ENCODE measurements at regions of chr6 and their contacts with region 1.

Region 1: GRCh38 chr6:167093922-167094432 is 28.9 kb upstream of the CCR6 start:
- DNase-seq: peak; percentile 32 to 82 (median 67)
- ATAC-seq: peak; percentile 69 to 74 (median 72)
- H3K4me3 ChIP-seq: peak overlapping the region; percentile 45 to 66
- H3K4me3 Mint-ChIP-seq: peak overlapping the region; percentile 61 to 73 (median 70)
- H3K27ac ChIP-seq: peak overlapping the region; percentile 82
- H3K27ac Mint-ChIP-seq: peak overlapping the region; percentile 84 to 93
- H3K4me1 ChIP-seq: peaks cover 50 to 68% of the 10 kb centered on the region in 2 experiments
- H3K4me1 Mint-ChIP-seq: peaks cover 63 to 85% (median 64%) of the 10 kb centered on the region in 3 donors
- H3K27me3 ChIP-seq: no peaks in the 10 kb centered on the region
- H3K27me3 Mint-ChIP-seq: no peaks in the 10 kb centered on the region

Region 2: GRCh38 chr6:167079853-167080297 is 14.1 kb before region 1 on chr6:
- CTCF ChIA-PET with region 1: no interaction called
- POLR2A ChIA-PET with region 1: no interaction called
- DNase-seq: peak in 31 of 35 experiments; percentile 21 to 71 (median 41)
- ATAC-seq: peak; percentile 54 to 92 (median 77)
- H3K4me3 ChIP-seq: no peak overlapping the region
- H3K4me3 Mint-ChIP-seq: peak overlapping the region in 2 of 3 donors; percentile 16 to 34
- H3K27ac ChIP-seq: peak overlapping the region; percentile 42
- H3K27ac Mint-ChIP-seq: peak overlapping the region; percentile 41 to 71
- H3K4me1 ChIP-seq: peaks cover 0 to 8% of the 10 kb centered on the region in 2 experiments
- H3K4me1 Mint-ChIP-seq: peaks cover 0 to 26% (median 12%) of the 10 kb centered on the region in 3 donors
- H3K27me3 ChIP-seq: no peaks in the 10 kb centered on the region
- H3K27me3 Mint-ChIP-seq: no peaks in the 10 kb centered on the region

Region 3: GRCh38 chr6:167113935-167114910 is 20.2 kb after region 1 on chr6:
- CTCF ChIA-PET with region 1: interaction called in 1 of 2 experiments, 3 read pairs
- POLR2A ChIA-PET with region 1: interaction called in 1 of 2 experiments, 12 read pairs
- DNase-seq: peak in 33 of 35 experiments; percentile 27 to 76 (median 54)
- ATAC-seq: peak; percentile 50 to 86 (median 66)
- H3K4me3 ChIP-seq: peak overlapping the region in 1 of 2 donors; percentile 51
- H3K4me3 Mint-ChIP-seq: peak overlapping the region; percentile 70 to 88 (median 86)
- H3K27ac ChIP-seq: peak overlapping the region; percentile 89
- H3K27ac Mint-ChIP-seq: peak overlapping the region; percentile 73 to 85
- H3K4me1 ChIP-seq: peaks cover 10 to 44% of the 10 kb centered on the region in 2 experiments
- H3K4me1 Mint-ChIP-seq: peaks cover 34 to 87% (median 54%) of the 10 kb centered on the region in 3 donors
- H3K27me3 ChIP-seq: no peaks in the 10 kb centered on the region
- H3K27me3 Mint-ChIP-seq: peaks cover 0 to 15% of the 10 kb centered on the region in 2 donors